Common myeloid progenitor, CD34-positive (primary cell): ENCODE measurements at regions of chr10 and their contacts with region 1.

Region 1: GRCh38 chr10:97412891-97413304 is 11.8 kb upstream of the RRP12 start:
- DNase-seq: peak in 2 of 3 donors; percentile 41 to 54
- H3K4me3 ChIP-seq: no peak overlapping the region
- H3K27ac ChIP-seq: no peak overlapping the region
- H3K4me1 ChIP-seq: peaks cover 3 to 35% (median 17%) of the 10 kb centered on the region in 4 experiments
- H3K27me3 ChIP-seq: no peaks in the 10 kb centered on the region

Region 2: GRCh38 chr10:97434055-97434454 is 21.2 kb after region 1 on chr10:
- CTCF ChIA-PET with region 1: interaction called, 10 read pairs
- POLR2A ChIA-PET with region 1: no interaction called
- DNase-seq: no peak
- H3K4me3 ChIP-seq: no peak overlapping the region
- H3K27ac ChIP-seq: no peak overlapping the region
- H3K4me1 ChIP-seq: peaks cover 0 to 3% (median 0%) of the 10 kb centered on the region in 4 experiments
- H3K27me3 ChIP-seq: no peaks in the 10 kb centered on the region